ENCODE measurements at regions of chr6 and their contacts with region 1.

Region 1: GRCh38 chr6:41735427-41736356 is at the start of gene TFEB:
- DNase-seq: peak; percentile 77 to 97
- H3K4me3 ChIP-seq: peak within 1 kb of the TSS; percentile 92 to 93
- H3K27ac ChIP-seq: peak within 1 kb of the TSS; percentile 90 to 99
- H3K4me1 ChIP-seq: peaks cover 0 to 26% of the 10 kb centered on the region in 2 donors
- H3K27me3 ChIP-seq: no peaks in the 10 kb centered on the region
- CTCF ChIP-seq: peak; percentile 86 to 99 (median 86)
- total RNA-seq, gene TFEB: 18.6 TPM

Region 2: DNA sequence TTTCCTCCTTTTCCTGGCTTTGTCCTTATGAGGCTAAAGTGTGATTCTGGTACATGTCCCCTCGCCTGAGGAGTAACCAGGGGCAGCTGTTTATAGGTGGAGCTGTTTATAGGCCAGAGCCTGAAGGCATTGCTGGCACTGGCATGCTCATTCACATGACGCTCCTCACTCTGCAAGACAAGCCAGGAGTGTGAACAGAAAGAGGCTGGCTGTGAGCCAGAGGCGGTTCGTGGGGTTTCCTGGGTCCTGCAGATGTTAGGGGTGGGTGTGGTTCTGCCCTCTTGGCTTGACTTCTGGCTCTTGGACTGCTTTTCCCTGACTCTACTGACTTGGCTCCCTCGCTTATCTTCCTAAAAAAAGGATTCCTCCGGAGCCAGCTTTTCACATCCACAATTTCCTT is 110.2 kb before region 1 on chr6:
- intact Hi-C with region 1: no loop called
- DNase-seq: no peak
- H3K4me3 ChIP-seq: no peak overlapping the region
- H3K27ac ChIP-seq: no peak overlapping the region
- H3K4me1 ChIP-seq: no peaks in the 10 kb centered on the region
- H3K27me3 ChIP-seq: no peaks in the 10 kb centered on the region
- CTCF ChIP-seq: no peak

Region 3: DNA sequence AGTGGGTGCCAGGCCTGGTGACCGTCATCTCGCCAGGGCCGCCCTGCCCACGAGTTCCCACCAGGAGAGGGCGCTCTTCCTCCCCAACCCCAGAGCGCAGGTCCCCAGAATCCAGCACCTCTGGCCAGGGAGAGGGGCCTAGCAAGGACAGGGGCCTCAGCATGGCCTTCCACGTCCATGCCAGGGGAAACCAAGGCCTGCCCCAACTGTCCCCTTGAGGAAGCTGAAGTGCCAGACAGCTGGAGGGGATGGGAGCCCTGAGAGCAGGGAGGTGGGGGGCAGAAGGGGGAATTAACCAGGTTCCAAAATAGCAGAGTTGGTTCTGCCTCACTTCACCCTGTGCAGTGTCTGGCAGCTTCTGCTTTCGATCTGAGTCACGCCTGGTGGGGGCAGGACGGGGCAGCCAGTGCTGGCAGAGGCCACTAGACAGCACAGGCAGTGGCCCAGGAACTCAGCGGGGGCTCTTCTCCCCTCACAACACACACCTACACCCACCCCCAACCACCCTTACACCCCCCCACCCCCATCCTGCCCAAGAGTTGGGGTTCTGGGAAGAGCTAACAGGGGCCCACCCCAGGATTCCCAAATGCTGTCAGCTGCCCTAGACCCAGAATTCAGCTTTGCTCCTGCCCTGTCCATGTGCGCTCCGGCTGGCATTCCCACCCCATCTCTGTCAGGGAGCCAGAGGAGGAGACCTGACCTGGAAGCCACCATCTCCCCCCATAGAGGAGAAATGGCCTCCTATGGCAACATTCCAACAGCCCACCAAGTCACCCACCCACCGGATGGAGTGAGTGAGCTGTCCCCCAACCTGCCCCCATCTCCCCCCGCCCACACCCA is 29.5 kb before region 1 on chr6:
- intact Hi-C with region 1: loop called (anchors 1 kb)
- DNase-seq: peak; percentile 74 to 92
- H3K4me3 ChIP-seq: peak overlapping the region in 1 of 2 donors; percentile 7
- H3K27ac ChIP-seq: peak overlapping the region; percentile 86 to 90
- H3K4me1 ChIP-seq: peaks cover 7 to 29% of the 10 kb centered on the region in 2 donors
- H3K27me3 ChIP-seq: no peaks in the 10 kb centered on the region
- CTCF ChIP-seq: peak; percentile 77 to 83 (median 78)

Region 4: GRCh38 chr6:41713161-41713649 is 22.5 kb before region 1 on chr6:
- intact Hi-C with region 1: loop called (anchors 1 kb)
- DNase-seq: peak in 1 of 2 donors; percentile 74
- H3K4me3 ChIP-seq: peak overlapping the region in 1 of 2 donors; percentile 11
- H3K27ac ChIP-seq: peak overlapping the region; percentile 86 to 90
- H3K4me1 ChIP-seq: peaks cover 22 to 46% of the 10 kb centered on the region in 2 donors
- H3K27me3 ChIP-seq: no peaks in the 10 kb centered on the region
- CTCF ChIP-seq: no peak

Region 5: GRCh38 chr6:41723530-41724227 is 12.0 kb before region 1 on chr6:
- intact Hi-C with region 1: loop called (anchors 1 kb)
- DNase-seq: peak; percentile 77 to 90
- H3K4me3 ChIP-seq: peak overlapping the region in 1 of 2 donors; percentile 12
- H3K27ac ChIP-seq: peak overlapping the region; percentile 66 to 67
- H3K4me1 ChIP-seq: peaks cover 4 to 34% of the 10 kb centered on the region in 2 donors
- H3K27me3 ChIP-seq: no peaks in the 10 kb centered on the region
- CTCF ChIP-seq: peak in 2 of 3 experiments; percentile 21 to 23

Region 6: DNA sequence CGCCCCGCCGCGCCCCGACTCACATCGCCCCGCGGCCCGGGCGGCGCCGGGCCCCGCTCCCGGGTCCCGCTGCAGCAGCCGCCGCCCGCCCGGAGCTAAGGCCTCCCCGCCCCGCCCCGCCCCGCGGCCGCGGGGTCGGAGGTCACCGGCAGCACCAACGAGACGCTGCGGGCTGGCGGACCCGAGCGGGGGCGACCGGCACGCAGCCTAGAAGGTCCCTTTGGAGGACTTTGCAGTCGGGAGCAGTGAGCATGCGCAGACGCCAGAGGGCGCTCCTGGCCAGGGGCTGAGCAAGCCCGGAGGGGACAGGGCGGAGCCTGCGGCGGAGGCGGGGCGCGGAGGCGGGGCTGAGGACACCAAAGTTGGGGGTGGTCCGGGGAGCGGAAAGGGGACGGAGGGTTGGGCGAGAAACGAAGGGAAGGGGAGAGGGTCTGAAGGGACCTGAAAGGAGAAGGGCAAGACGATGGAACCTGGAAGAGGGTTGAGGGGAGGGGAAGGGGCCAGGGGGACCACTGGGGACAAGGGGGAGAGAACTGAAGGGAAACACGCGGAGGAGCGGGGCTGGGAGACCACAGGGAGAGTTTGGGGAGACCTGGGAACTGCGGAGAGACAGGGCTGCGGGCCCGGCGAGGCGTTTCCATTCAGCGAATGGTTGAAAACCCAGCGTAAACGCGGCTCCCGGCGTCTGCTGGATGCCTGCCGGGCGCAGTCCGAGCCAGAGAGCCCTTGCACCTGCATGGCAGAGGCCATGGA is 44.3 kb after region 1 on chr6 and contains the start of gene FRS3:
- intact Hi-C with region 1: loop called (anchors 2 kb)
- DNase-seq: peak; percentile 88 to 98
- H3K4me3 ChIP-seq: peak within 1 kb of the TSS; percentile 71 to 95
- H3K27ac ChIP-seq: peak within 1 kb of the TSS; percentile 72 to 88
- H3K4me1 ChIP-seq: peaks cover 6 to 14% of the 10 kb centered on the region in 2 donors
- H3K27me3 ChIP-seq: no peaks in the 10 kb centered on the region
- CTCF ChIP-seq: peak; percentile 92 to 97 (median 93)
- total RNA-seq, gene FRS3: 26.0 TPM

Measured in ascending aorta (tissue), 2 donors.